Activated CD4-positive, alpha-beta T cell treated with anti-CD3 and anti-CD28 coated beads for 36 hours (primary cell): ENCODE measurements at regions of chr2 and their contacts with region 1.

Region 1: DNA sequence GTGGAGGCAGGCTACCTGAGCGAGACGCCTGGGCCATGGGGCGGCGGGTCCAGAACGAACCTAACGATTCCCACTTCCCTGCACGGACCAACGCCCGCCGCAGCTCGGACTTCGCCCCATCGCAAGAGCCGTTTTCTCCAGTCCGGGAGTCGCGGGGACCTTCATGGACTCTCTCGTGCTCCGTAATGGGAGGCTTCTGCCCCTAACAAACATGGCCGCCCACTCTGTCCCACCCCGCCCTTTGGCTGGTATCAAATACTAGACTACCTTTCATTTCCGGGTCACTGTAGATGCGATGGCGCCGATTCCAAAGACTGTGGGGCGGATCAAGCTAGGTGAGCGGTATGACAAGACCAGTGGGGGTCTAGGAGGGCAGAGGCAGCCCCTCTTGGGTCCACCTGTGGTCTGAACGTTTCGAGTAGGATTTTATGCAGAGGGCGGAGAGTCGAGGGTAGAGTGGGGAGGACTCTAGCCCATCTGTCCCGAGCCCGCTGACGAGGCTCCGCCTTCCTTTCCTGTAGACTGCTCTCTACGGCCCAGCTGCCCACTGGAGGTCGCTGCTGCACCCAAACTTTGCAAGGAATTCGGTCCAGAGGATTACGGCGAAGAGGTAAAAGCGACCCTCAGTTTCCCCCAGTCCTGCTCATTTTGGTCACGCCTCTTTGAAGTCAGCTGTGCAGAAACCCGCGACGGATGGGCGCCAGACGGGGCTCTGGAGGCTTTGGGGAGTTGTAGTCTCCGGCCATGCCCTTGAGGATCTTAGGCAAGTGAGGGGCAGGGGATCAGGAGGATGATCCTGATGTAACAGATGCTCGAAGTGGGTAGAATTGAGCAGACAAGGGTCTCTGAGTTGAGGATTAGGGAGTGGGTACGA is at the starts of genes CCDC142 and TTC31:
- DNase-seq: peak; percentile 96
- ATAC-seq: peak; percentile 95
- H3K4me3 Mint-ChIP-seq: peak within 1 kb of the TSS; percentile 90
- H3K27ac Mint-ChIP-seq: peak within 1 kb of the TSS; percentile 99
- H3K4me1 Mint-ChIP-seq: peaks cover 31% of the 10 kb centered on the region
- H3K27me3 Mint-ChIP-seq: no peaks in the 10 kb centered on the region
- total RNA-seq, gene CCDC142: 9.7 to 13.2 TPM
- total RNA-seq, gene TTC31: 24.0 to 24.6 TPM

Region 2: DNA sequence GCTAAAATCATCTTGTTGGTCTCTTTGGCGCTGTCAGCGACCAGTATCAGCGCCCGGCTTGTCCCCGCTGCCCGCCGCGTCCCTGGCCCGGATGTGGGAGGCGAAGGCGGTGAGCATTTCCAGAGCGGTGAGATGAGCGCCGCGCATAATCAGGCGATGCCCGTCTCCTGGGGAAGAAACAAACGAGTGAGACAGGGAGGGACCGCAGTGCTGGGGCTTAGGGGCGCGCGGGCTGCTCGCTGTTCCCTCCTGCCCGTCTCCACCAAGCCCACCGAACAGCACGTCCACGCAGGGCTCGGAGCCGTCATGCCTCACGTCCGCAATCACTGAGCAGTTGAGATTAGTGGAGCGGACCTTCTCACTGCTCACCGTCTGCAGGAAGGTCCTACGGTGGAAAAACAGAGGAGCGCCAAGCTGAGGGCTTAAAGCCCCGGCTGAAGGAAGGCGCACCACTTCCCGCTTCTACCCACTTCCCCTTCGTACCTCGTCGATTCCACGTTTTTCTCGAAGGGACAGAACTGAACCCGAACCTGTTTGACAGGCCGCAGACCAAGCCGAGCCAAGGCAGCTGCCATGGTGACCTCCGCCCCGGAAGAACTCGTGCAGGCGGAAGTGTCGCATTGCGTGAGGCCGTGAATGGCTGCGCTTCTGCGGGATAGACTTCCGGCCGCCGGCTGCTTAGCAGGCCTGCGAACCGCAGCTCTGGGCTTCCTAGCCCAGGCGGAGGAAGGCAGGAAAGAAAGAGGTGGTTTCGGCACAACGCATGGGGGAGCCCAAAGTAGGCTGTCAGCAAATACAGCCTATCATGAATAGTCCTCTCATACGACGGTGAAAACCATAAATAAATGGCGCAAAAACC is 10.7 kb before region 1 on chr2 and contains the start of gene MRPL53:
- CTCF ChIA-PET with region 1: interaction called, 39 read pairs
- POLR2A ChIA-PET with region 1: interaction called, 6 read pairs
- intact Hi-C with region 1: loop called (anchors 1 kb)
- DNase-seq: peak; percentile 97
- ATAC-seq: peak; percentile 92
- H3K4me3 Mint-ChIP-seq: peak within 1 kb of the TSS; percentile 98
- H3K27ac Mint-ChIP-seq: peak within 1 kb of the TSS; percentile 93
- H3K4me1 Mint-ChIP-seq: peaks cover 21% of the 10 kb centered on the region
- H3K27me3 Mint-ChIP-seq: no peaks in the 10 kb centered on the region
- total RNA-seq, gene MRPL53: 87.4 to 88.5 TPM

Region 3: DNA sequence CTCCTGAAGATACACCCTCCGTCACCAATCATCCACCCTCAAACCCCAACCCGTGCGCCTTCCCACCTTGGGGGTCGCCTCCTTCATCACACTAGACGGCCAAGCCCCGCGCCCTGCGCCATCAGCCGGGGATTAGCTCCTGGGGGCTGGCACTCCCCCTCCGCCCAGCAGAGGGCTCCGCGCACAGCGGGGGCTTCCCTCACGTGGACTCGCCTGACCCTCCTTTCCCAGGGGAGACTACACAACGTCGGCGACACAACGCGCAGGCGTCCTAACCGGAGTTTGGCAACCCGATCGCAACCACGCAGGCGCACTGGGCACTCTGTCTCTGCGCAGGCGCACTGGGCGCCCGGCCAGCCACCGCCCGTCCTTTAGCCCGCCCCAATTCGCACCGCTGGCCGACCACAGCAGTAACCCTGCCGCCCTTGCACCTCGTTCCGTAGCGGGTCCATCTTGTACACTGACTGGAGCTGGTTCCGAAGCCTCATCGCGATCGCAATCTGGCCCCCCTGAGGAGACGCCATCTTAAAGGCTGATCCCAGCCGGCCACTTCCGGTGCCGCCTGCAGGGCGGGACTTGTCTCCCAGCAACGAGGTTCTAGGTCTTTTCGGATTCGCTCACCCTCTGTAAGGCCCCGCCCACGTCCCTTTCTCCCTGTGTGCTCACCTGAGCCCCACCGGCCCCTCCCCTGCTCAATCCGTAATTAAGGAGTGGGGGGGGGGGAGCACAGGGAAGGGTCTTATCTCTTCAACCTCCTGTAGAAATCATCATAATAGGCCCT is 24.3 kb after region 1 on chr2 and contains the start of gene PCGF1:
- CTCF ChIA-PET with region 1: interaction called, 7 read pairs
- POLR2A ChIA-PET with region 1: no interaction called
- intact Hi-C with region 1: loop called (anchors 1 kb)
- DNase-seq: peak; percentile 99
- ATAC-seq: peak; percentile 92
- H3K4me3 Mint-ChIP-seq: peak within 1 kb of the TSS; percentile 93
- H3K27ac Mint-ChIP-seq: peak within 1 kb of the TSS; percentile 99
- H3K4me1 Mint-ChIP-seq: peaks cover 40% of the 10 kb centered on the region
- H3K27me3 Mint-ChIP-seq: peaks cover 38% of the 10 kb centered on the region
- total RNA-seq, gene PCGF1: 21.7 to 28.7 TPM

Region 4: GRCh38 chr2:74653985-74654882 is 171.2 kb after region 1 on chr2 and contains the start of gene SEMA4F:
- CTCF ChIA-PET with region 1: no interaction called
- POLR2A ChIA-PET with region 1: interaction called, 3 read pairs
- intact Hi-C with region 1: loop called in 1 of 2 experiments (anchors 1 kb)
- DNase-seq: peak; percentile 97
- ATAC-seq: peak; percentile 100
- H3K4me3 Mint-ChIP-seq: peak within 1 kb of the TSS; percentile 76
- H3K27ac Mint-ChIP-seq: peak within 1 kb of the TSS; percentile 49
- H3K4me1 Mint-ChIP-seq: peaks cover 13% of the 10 kb centered on the region
- H3K27me3 Mint-ChIP-seq: peaks cover 7% of the 10 kb centered on the region
- total RNA-seq, gene SEMA4F: 5.7 to 7.4 TPM